ENCODE measurements at regions of chr10 and their contacts with region 1.

Region 1: DNA sequence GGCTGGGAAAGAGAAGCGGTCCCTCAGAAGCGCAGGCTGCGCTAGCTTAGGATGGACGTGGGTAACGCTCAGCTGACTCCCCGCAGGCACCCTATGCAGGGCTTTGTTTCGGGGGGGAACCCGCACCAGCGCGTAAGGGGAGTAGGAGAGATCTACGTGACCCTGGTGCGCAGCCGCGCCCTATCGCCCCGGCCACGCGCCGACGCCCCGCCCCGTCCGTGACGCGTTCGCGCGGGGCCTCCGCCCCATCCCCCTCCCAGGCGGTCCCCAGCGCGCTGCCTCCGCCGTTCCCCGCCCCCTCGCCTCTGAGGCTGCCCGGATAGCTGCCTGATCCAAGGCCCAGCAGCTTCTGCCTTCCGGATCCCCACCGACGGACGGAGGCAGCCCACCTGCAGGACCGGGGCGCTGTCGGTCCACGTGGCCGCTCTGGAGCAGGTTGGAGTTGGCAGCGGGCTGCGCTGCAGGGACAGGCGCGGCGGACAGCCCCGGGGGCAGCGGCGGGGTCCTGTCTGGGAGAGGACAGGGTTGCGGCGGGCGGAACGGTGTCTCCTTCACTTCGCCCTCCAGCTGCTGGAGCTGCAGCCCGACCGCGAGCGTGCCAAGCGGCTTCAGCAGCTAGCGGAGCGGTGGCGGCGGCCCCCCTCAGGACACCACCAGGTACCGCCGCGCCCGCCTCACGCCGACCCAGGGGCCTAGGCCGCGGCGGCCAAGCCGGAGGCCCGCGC is at the start of gene VDAC2:
- DNase-seq: peak; percentile 94
- H3K4me3 Mint-ChIP-seq: peak within 1 kb of the TSS; percentile 97
- H3K27ac Mint-ChIP-seq: peak within 1 kb of the TSS; percentile 100
- H3K4me1 Mint-ChIP-seq: peaks cover 45% of the 10 kb centered on the region
- H3K27me3 Mint-ChIP-seq: no peaks in the 10 kb centered on the region
- total RNA-seq, gene VDAC2: 98.6 to 122 TPM

Region 2: DNA sequence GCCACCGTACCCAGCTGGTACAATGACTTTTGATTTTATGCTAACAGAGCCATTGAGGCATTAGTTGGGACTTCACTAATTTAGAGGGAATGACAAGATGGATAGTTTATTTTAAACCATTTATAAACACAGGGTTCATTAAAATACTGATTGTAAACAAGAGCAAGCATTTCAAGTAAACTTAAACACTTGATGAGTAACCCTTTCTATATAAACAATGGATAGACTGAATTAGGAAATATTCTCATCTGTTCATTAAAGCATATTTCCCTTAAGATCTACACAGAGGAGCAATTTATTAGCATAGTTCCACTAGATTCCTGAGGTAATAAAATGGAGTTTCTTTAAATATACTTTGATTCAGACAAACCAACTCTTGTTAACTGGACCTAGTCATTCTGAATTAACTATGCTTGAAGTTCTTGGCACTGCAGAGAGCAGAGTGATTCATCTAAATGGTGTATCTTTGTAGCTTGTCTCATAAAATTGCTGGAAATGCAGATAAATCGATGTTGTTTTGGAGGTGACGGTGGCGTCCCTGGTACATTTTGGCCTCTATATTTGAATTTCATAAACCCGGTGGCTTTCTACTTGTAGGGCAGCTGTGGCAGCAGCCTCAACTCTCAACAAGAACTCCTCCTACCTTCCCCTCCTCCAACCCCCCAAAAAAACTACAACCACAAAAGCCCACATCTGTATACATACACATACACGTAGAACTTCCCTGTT is 15.2 kb before region 1 on chr10:
- CTCF ChIA-PET with region 1: interaction called, 16 read pairs
- POLR2A ChIA-PET with region 1: no interaction called
- DNase-seq: no peak
- H3K4me3 Mint-ChIP-seq: no peak overlapping the region
- H3K27ac Mint-ChIP-seq: no peak overlapping the region
- H3K4me1 Mint-ChIP-seq: peaks cover 2% of the 10 kb centered on the region
- H3K27me3 Mint-ChIP-seq: no peaks in the 10 kb centered on the region

Region 3: GRCh38 chr10:75226656-75227055 is 16.2 kb after region 1 on chr10:
- CTCF ChIA-PET with region 1: interaction called, 40 read pairs
- POLR2A ChIA-PET with region 1: interaction called, 5 read pairs
- DNase-seq: no peak
- H3K4me3 Mint-ChIP-seq: no peak overlapping the region
- H3K27ac Mint-ChIP-seq: no peak overlapping the region
- H3K4me1 Mint-ChIP-seq: peaks cover 54% of the 10 kb centered on the region
- H3K27me3 Mint-ChIP-seq: no peaks in the 10 kb centered on the region

Measured in activated CD4-positive, alpha-beta T cell treated with anti-CD3 and anti-CD28 coated beads, Interleukin-2, amount 10 ng/mL, durations not matched to agents 7 days and 5 days (primary cell).